Breast epithelium (tissue), 4 donors: ENCODE measurements at regions of chr2 and their contacts with region 1.

Region 1: DNA sequence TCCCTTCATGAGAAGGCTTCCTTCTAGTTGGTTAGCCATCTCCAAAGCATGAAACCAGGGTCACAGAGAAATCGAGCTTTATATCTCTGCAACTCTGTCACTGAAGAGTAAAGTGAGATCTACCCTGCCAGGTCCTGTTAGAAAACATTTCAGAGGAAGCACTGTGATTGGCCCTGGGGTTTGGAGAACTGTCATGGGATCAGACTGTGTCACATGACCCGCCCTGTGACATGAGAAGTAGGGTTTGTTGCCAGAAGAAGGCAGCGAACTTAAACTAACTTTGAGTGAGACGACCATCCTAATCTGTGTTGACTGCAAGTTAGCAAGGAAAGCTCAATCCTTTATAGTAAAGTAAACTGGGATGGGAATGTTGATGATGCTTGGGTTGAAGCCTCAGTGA is 55.5 kb downstream of the SLC9A2 start:
- DNase-seq: no peak
- H3K4me3 ChIP-seq: no peak overlapping the region
- H3K27ac ChIP-seq: no peak overlapping the region
- H3K4me1 ChIP-seq: no peaks in the 10 kb centered on the region
- H3K27me3 ChIP-seq: no peaks in the 10 kb centered on the region
- CTCF ChIP-seq: no peak
- POLR2A ChIP-seq: no peak

Region 2: GRCh38 chr2:102657770-102658169 is 17.1 kb before region 1 on chr2:
- intact Hi-C with region 1: loop called (anchors 1 kb)
- DNase-seq: no peak
- H3K4me3 ChIP-seq: no peak overlapping the region
- H3K27ac ChIP-seq: no peak overlapping the region
- H3K4me1 ChIP-seq: no peaks in the 10 kb centered on the region
- H3K27me3 ChIP-seq: no peaks in the 10 kb centered on the region
- CTCF ChIP-seq: no peak
- POLR2A ChIP-seq: no peak

Region 3: DNA sequence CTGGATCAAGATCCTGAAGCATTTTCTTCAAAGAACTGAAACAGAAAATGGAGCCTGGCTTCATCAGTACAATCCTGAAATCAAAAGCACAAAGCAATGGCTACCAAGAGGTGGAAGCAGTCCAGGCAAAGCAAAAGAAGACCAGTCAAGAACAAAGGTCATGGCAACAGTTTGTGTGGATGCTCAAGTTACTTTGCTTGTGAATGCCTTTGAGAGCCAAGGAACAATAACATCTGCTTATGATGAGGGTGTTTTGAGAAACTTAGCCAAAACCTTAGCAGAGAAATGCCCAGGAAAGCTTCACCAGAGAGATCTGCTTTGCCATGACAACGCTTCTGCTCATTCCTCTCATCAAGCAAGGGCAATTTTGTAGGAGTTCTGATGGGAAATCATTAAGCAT is 810.1 kb after region 1 on chr2:
- intact Hi-C with region 1: no loop called
- DNase-seq: no peak
- H3K4me3 ChIP-seq: no peak overlapping the region
- H3K27ac ChIP-seq: no peak overlapping the region
- H3K4me1 ChIP-seq: no peaks in the 10 kb centered on the region
- H3K27me3 ChIP-seq: no peaks in the 10 kb centered on the region
- CTCF ChIP-seq: no peak
- POLR2A ChIP-seq: no peak